ENCODE measurements at regions of chr1 and their contacts with region 1.

Region 1: GRCh38 chr1:26126321-26127084 is 14.9 kb downstream of the PDIK1L start:
- DNase-seq: peak; percentile 69
- H3K4me3 Mint-ChIP-seq: peak overlapping the region; percentile 73
- H3K27ac Mint-ChIP-seq: peak overlapping the region; percentile 81
- H3K4me1 Mint-ChIP-seq: peaks cover 74% of the 10 kb centered on the region
- H3K27me3 Mint-ChIP-seq: peaks cover 3% of the 10 kb centered on the region

Region 2: DNA sequence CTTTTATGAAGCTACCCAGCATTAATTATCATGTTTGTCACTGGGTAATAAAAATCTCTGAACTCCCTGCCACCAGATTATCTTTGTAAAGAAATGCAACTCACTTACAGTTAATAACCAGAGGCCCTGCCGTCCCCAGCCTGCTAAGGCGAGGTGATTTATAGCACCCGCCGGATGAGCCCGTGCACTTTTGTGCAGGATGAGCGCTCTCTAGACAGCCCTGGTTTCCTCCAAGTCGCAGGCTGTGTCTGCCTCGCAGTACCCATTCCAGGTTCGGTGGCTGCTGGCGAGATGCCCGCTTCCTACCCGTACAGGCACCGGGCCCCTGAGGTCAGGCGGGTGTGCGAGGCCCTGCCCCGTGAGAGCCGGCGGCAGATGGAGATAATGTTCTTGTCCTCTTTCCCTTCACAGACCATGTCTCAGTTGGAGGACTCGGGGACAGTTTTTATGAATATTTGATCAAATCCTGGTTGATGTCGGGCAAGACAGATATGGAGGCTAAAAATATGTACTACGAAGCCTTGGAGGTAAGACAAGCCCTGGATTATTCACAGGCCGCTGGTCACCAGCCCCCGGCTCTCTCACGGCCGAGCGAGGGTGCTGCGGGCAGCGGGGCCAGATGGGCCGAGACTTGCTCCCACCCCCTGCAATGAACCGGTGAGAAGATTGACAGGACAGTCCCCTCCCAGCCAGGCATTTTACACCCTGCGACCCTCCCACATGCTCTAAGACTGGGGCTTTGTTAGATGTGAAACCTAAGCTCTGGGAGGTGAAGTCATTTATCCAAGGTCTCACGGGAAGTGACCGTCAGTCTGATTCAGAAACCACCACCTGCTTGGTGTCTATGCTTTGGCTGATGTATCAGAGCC is 355.0 kb before region 1 on chr1:
- CTCF ChIA-PET with region 1: no interaction called
- POLR2A ChIA-PET with region 1: no interaction called
- DNase-seq: no peak
- H3K4me3 Mint-ChIP-seq: no peak overlapping the region
- H3K27ac Mint-ChIP-seq: no peak overlapping the region
- H3K4me1 Mint-ChIP-seq: peaks cover 27% of the 10 kb centered on the region
- H3K27me3 Mint-ChIP-seq: peaks cover 2% of the 10 kb centered on the region

Region 3: DNA sequence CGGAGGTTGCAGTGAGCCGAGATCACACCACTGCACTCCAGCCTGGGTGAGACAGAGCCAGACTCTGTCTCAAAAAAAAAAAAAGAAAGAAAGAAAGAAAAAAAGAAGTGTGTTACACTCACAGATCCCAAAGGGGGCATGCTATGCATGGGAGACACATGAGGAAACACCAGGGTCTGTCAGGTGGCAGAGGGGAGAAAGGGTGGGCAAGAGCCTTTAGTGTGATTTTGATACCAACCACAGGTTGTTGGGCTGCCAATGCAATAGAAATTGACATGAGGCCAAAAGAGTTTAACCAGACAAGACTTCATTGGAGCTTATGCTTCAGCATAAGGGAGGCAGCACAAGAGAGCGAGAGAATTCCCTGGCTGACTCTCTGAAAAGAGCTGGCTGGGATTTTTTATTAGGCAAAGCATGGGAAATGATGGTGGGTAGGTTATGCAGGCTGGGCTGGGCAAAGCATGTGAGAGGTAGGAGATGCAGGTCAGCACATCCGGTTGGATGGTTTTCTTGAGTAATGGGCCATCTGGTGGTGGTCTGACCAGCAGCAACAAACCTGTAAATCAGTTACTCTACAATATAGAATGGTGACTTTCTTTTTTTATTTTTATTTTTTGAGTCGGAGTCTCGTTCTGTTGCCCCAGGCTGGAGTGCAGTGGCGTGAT is 116.6 kb before region 1 on chr1:
- CTCF ChIA-PET with region 1: no interaction called
- POLR2A ChIA-PET with region 1: no interaction called
- DNase-seq: no peak
- H3K4me3 Mint-ChIP-seq: no peak overlapping the region
- H3K27ac Mint-ChIP-seq: no peak overlapping the region
- H3K4me1 Mint-ChIP-seq: no peaks in the 10 kb centered on the region
- H3K27me3 Mint-ChIP-seq: no peaks in the 10 kb centered on the region

Region 4: GRCh38 chr1:26066857-26067256 is 59.6 kb before region 1 on chr1:
- CTCF ChIA-PET with region 1: no interaction called
- POLR2A ChIA-PET with region 1: no interaction called
- DNase-seq: no peak
- H3K4me3 Mint-ChIP-seq: no peak overlapping the region
- H3K27ac Mint-ChIP-seq: no peak overlapping the region
- H3K4me1 Mint-ChIP-seq: no peaks in the 10 kb centered on the region
- H3K27me3 Mint-ChIP-seq: peaks cover 18% of the 10 kb centered on the region

Region 5: GRCh38 chr1:26111530-26112406 is 14.7 kb before region 1 on chr1 and contains the start of gene PDIK1L:
- CTCF ChIA-PET with region 1: interaction called, 31 read pairs
- POLR2A ChIA-PET with region 1: interaction called, 318 read pairs
- DNase-seq: peak; percentile 95
- H3K4me3 Mint-ChIP-seq: peak within 1 kb of the TSS; percentile 95
- H3K27ac Mint-ChIP-seq: peak within 1 kb of the TSS; percentile 86
- H3K4me1 Mint-ChIP-seq: peaks cover 35% of the 10 kb centered on the region
- H3K27me3 Mint-ChIP-seq: no peaks in the 10 kb centered on the region
- total RNA-seq, gene PDIK1L: 21.3 to 22.7 TPM

Region 6: DNA sequence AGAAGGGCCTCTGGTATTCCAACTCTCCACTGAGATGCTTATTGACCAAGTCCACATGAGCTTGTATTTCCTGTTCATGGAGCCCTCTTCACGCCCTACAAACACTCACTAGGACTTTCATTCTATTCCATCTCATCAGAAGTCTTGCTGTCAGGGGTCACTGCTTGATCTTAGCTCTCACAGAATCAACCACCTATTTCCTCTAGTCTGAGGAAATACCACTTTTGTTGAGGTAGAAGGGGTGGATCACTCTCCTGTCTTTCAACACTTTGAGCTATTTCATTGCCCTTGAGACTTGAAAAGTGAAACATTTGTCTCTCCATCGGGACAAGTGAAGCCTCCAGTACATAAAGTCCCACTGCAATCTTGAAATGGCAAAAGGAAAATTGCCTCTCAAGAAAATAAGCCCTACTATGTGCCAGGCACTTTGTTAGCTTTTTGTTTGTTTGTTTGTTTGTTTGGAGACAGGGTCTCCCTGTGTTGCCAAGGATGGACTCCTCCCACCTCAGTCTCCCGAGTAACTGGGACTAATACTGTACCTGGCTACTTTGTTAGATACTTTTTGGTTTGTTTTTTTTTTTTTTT is 12.6 kb after region 1 on chr1:
- CTCF ChIA-PET with region 1: interaction called, 102 read pairs
- POLR2A ChIA-PET with region 1: interaction called, 62 read pairs
- DNase-seq: no peak
- H3K4me3 Mint-ChIP-seq: no peak overlapping the region
- H3K27ac Mint-ChIP-seq: no peak overlapping the region
- H3K4me1 Mint-ChIP-seq: peaks cover 10% of the 10 kb centered on the region
- H3K27me3 Mint-ChIP-seq: peaks cover 7% of the 10 kb centered on the region

Region 7: DNA sequence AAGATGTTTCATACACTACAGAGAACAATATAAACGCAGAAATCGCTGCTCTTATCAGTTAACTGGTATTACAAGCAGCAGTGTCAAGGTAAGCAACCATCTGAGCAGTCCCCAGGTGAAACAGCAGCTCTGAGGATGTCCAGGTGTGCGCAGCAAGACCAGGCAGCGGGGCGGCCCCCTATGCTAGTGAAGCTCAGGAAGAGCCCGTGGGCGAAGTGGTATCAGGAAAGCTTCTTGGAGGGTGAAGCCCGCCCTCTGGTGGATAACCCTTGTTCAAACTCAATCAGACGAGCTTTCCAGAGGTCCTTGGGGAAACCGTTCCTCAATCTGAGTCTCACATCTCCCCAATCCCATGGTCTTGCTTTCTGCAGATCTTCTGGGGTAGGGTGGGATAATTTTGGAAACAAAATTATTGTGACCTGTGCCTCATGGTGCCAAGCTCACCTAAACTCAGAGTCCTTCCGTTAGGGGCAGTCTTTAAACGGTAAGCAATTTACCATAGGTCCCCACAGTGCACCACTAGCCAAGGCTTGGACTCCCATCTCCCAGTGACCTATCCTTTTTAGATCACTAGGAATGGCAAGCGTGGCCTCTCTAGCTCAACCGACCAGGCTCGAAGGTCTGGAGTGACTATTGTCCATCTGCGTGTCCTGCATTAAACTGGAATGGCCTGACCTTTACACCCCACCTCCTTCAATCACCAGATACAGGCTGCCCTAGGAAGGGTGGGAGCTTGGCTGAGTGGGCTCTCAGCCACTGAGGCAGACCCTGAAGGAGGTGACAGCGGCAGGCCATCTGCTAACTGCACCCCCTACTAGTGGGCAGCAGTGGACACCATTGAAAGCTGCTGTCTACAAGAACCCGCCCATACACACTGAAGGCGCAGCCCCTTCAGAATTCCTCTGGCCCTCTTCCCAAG is 18.8 kb after region 1 on chr1:
- CTCF ChIA-PET with region 1: interaction called, 102 read pairs
- POLR2A ChIA-PET with region 1: interaction called, 62 read pairs
- DNase-seq: peak; percentile 76
- H3K4me3 Mint-ChIP-seq: no peak overlapping the region
- H3K27ac Mint-ChIP-seq: no peak overlapping the region
- H3K4me1 Mint-ChIP-seq: peaks cover 2% of the 10 kb centered on the region
- H3K27me3 Mint-ChIP-seq: peaks cover 30% of the 10 kb centered on the region

Region 8: GRCh38 chr1:26203642-26204318 is 77.3 kb after region 1 on chr1:
- CTCF ChIA-PET with region 1: interaction called, 7 read pairs
- POLR2A ChIA-PET with region 1: interaction called, 16 read pairs
- DNase-seq: no peak
- H3K4me3 Mint-ChIP-seq: no peak overlapping the region
- H3K27ac Mint-ChIP-seq: no peak overlapping the region
- H3K4me1 Mint-ChIP-seq: peaks cover 41% of the 10 kb centered on the region
- H3K27me3 Mint-ChIP-seq: no peaks in the 10 kb centered on the region

Region 9: DNA sequence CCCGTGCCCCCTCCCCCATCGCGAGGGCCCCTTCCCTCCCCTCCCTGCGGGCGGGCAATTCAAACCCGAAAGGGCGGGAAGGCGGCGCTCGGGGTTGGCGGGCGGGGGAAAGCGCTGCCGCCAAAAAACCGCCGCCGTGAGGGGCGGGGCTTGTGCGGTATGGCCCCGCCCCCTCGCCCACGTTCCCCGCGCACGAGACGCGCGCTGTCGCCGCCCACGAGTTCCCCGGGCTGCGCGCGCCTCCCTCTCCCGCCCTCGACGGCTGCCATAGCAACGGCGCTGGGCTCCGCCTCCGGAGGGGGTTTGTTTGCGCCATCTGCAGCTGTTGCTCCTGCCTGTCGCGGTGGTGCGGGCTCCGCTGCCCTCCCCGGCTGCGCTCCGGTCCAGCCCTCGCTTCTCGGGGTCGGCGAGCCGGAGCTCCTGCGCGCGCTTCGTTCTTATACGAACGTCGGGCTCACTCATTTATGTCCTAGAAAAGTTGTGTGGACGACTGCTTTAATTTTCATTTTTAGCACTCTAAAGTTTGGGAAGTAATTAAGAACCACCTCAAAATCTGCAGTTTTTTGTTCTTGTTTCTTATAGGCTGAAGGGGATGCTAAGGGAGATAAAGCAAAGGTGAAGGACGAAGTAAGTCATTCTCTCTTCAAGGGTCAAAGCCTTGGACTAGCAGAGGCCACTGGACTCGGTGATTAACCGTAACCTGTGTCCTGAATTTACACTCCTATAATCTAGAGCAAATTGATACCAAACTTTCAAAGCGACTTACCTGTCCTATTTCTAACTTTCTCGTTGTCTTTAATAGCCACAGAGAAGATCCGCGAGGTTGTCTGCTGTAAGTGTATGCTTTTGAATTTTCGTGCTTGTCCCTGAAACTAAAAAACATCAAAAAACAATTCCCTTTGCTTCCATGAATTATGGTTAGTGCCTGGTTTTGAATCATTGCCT is 346.7 kb after region 1 on chr1:
- CTCF ChIA-PET with region 1: no interaction called
- POLR2A ChIA-PET with region 1: interaction called, 13 read pairs
- DNase-seq: peak; percentile 97
- H3K4me3 Mint-ChIP-seq: peak overlapping the region; percentile 90
- H3K27ac Mint-ChIP-seq: peak overlapping the region; percentile 66
- H3K4me1 Mint-ChIP-seq: peaks cover 52% of the 10 kb centered on the region
- H3K27me3 Mint-ChIP-seq: no peaks in the 10 kb centered on the region

Measured in activated CD4-positive, alpha-beta memory T cell treated with anti-CD3 and anti-CD28 coated beads, Interleukin-2, amount 10 ng/mL, durations not matched to agents 7 days and 5 days (primary cell).